Esophagus muscularis mucosa (tissue), 4 donors: ENCODE measurements at regions of chr3 and their contacts with region 1.

Region 1: GRCh38 chr3:47989981-47990440 is 26.2 kb downstream of the MAP4 start:
- DNase-seq: peak; percentile 93
- H3K4me3 ChIP-seq: no peak overlapping the region
- H3K27ac ChIP-seq: peak overlapping the region in 1 of 4 donors; percentile 12
- H3K4me1 ChIP-seq: peaks cover 23 to 40% (median 27%) of the 10 kb centered on the region in 4 donors
- H3K27me3 ChIP-seq: no peaks in the 10 kb centered on the region
- CTCF ChIP-seq: peak; percentile 93 to 94 (median 93)
- EP300 ChIP-seq: no peak
- POLR2A ChIP-seq: no peak

Region 2: DNA sequence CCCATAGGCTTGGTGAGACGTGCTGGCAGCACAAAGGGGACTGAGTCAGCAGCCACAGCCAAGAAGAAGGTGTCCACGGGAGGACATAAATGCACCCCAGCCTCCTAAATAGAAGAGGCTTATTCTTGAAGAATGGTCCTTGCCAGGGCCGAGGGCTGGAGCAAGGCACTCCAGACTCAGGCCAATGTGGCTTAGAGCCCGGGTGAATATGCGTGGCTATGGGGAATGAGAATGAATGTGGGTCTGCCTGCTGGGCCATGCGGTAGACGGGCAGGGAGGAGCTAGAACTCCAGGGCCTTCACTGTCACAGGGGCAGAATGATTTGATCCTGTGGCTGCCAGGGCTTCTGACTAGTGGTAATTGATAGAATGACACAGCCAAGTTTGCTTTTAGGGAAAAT is 153.0 kb before region 1 on chr3:
- intact Hi-C with region 1: loop called (anchors 5 kb)
- DNase-seq: no peak
- H3K4me3 ChIP-seq: no peak overlapping the region
- H3K27ac ChIP-seq: no peak overlapping the region
- H3K4me1 ChIP-seq: peaks cover 0 to 9% (median 0%) of the 10 kb centered on the region in 4 donors
- H3K27me3 ChIP-seq: no peaks in the 10 kb centered on the region
- CTCF ChIP-seq: no peak
- EP300 ChIP-seq: no peak
- POLR2A ChIP-seq: no peak